ENCODE measurements at regions of chr6 and their contacts with region 1.

Region 1: GRCh38 chr6:20126789-20127653 is 85.2 kb downstream of the MBOAT1 start:
- DNase-seq: peak; percentile 40 to 62
- H3K4me3 ChIP-seq: no peak overlapping the region
- H3K27ac ChIP-seq: no peak overlapping the region
- H3K4me1 ChIP-seq: no peaks in the 10 kb centered on the region
- H3K27me3 ChIP-seq: no peaks in the 10 kb centered on the region
- CTCF ChIP-seq: peak; percentile 91

Region 2: GRCh38 chr6:19368509-19368908 is 758.5 kb before region 1 on chr6:
- CTCF ChIA-PET with region 1: no interaction called
- POLR2A ChIA-PET with region 1: no interaction called
- intact Hi-C with region 1: no loop called
- DNase-seq: peak in 1 of 2 experiments; percentile 2
- H3K4me3 ChIP-seq: no peak overlapping the region
- H3K27ac ChIP-seq: no peak overlapping the region
- H3K4me1 ChIP-seq: 0 out of 2 replicates have a peak, but pooled peaks cover 4% of the 10 kb centered on the region
- H3K27me3 ChIP-seq: no peaks in the 10 kb centered on the region
- CTCF ChIP-seq: no peak

Region 3: DNA sequence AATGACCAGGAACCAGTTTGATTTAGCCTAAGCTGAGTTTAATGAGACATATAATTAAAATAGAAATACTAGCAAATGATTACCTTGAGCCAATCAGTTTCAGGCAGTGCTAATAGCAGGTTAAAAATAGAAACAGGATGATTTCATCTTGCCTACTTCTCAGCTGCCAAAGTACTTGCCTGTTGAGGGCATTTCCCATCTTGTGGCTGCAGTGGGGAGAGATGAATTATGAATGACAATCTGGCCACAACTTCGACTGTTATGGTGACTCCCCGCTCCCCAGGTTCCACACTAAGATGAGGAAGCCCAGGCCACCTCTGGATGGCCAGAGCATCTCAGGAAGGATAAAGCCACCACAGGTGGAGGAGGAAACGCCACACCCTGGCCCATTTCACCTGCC is 53.9 kb after region 1 on chr6:
- CTCF ChIA-PET with region 1: no interaction called
- POLR2A ChIA-PET with region 1: interaction called, 32 read pairs
- intact Hi-C with region 1: no loop called
- DNase-seq: no peak
- H3K4me3 ChIP-seq: no peak overlapping the region
- H3K27ac ChIP-seq: no peak overlapping the region
- H3K4me1 ChIP-seq: 0 out of 2 replicates have a peak, but pooled peaks cover 11% of the 10 kb centered on the region
- H3K27me3 ChIP-seq: no peaks in the 10 kb centered on the region
- CTCF ChIP-seq: no peak

Region 4: GRCh38 chr6:20236909-20237600 is 110.0 kb after region 1 on chr6:
- CTCF ChIA-PET with region 1: no interaction called
- POLR2A ChIA-PET with region 1: interaction called, 8 read pairs
- intact Hi-C with region 1: loop called (anchors 1 kb)
- DNase-seq: peak in 1 of 2 experiments; percentile 71
- H3K4me3 ChIP-seq: no peak overlapping the region
- H3K27ac ChIP-seq: peak overlapping the region; percentile 37
- H3K4me1 ChIP-seq: peaks cover 19% of the 10 kb centered on the region
- H3K27me3 ChIP-seq: no peaks in the 10 kb centered on the region
- CTCF ChIP-seq: no peak

Region 5: DNA sequence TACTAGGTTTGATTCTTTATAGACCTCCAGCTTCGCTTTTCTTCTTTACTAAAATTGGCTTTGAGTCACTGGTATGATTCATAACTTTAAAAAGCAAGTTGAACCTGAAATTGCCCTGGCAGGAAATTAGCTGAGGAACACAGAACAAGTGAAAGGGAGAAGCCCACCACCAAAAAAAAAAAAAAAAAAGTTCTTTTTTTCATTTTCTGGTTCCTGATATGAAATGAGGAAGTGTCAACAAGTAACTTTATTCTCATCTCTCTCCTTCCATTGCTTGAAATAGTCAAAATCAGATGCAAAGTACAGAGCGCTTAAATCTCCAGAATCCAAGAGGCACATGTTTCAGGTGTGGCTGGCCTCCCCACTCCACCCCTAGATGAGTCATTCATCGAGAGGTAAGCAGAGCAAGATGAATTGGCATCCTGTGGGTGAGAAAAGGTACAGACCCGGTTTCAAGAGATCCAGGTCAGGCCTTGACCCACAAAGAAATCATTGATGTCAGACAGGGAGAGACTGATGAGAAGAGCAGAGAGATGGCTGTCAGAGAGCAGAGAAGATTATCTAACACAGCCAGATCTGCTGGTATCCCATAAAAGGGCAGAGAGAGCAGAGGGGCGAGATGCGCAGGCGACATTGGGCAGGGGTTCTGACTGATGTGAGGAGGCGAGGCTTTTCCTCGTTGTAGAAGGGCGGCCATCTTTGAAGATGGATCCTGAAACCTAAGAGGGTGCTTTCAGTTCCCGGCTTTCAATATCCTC is 140.0 kb after region 1 on chr6:
- CTCF ChIA-PET with region 1: no interaction called
- POLR2A ChIA-PET with region 1: no interaction called
- intact Hi-C with region 1: loop called (anchors 5 kb)
- DNase-seq: peak; percentile 57 to 60
- H3K4me3 ChIP-seq: no peak overlapping the region
- H3K27ac ChIP-seq: peak overlapping the region; percentile 40
- H3K4me1 ChIP-seq: peaks cover 13% of the 10 kb centered on the region
- H3K27me3 ChIP-seq: no peaks in the 10 kb centered on the region
- CTCF ChIP-seq: no peak

Region 6: DNA sequence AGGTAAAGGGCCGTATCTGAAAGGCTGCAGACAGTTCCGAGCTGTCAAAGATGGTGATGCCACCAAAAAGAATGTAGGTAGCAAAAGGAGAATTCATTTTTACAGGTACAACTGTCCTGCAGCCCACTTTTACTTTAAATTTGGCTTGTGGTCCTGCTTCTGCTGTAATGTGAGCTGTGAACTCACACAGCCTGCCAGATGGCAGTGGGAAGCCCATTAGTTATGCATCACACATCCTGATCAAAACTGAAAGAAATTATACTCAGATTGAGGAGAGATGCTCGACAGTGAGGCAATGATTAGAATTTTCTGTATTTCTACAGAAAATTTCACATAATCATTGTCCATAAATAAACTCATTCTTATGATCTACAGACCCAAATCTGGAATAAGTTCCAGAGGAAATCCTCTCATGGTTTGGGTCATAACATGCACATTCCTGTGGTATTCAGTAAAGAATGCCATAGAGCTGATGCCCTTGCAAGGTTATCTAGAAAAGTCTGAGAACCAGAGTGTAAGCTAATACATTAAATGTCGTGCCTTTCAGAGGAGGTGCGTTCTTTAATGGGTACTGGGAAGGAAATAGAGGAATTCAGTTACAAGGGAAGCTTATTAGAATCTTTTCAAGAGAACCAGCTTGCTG is 250.7 kb after region 1 on chr6:
- CTCF ChIA-PET with region 1: no interaction called
- POLR2A ChIA-PET with region 1: no interaction called
- intact Hi-C with region 1: no loop called
- DNase-seq: no peak
- H3K4me3 ChIP-seq: no peak overlapping the region
- H3K27ac ChIP-seq: no peak overlapping the region
- H3K4me1 ChIP-seq: no peaks in the 10 kb centered on the region
- H3K27me3 ChIP-seq: no peaks in the 10 kb centered on the region
- CTCF ChIP-seq: no peak